K562 (cell line): ENCODE measurements at regions of chr17 and their contacts with region 1.

Region 1: GRCh38 chr17:21034340-21035235 is 8.2 kb downstream of the USP22 start:
- DNase-seq: peak in 1 of 4 experiments; percentile 25
- ATAC-seq: peak; percentile 66
- H3K4me3 ChIP-seq: no peak overlapping the region
- H3K27ac ChIP-seq: peak overlapping the region; percentile 64
- H3K4me1 ChIP-seq: peaks cover 9 to 34% of the 10 kb centered on the region in 2 experiments; a peak in 4 of 5 replicates
- H3K27me3 ChIP-seq: no peaks in the 10 kb centered on the region
- CTCF ChIP-seq: no peak
- EP300 ChIP-seq: peak; percentile 77
- POLR2A ChIP-seq: no peak
- RAD21 ChIP-seq: no peak

Region 2: DNA sequence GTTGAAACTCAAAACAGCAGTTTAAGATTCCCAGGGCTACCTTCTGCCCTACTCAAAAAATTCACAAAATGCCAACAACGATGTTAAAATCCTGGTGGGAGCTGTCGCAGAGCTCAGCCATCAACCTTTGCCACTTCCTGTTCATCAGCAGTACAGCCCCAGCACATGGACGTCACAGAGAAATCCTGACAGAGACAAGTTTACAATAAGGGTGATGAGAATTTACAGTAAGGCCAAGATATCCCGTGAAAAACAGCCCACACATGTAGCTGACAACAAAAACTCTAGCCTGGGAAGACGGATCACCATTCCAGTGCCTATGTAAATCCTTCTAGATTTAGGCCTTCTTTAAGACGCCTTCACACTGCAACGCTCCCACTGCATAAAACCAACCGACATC is 10.6 kb before region 1 on chr17:
- CTCF ChIA-PET with region 1: no interaction called
- POLR2A ChIA-PET with region 1: interaction called, 10 read pairs
- in situ Hi-C with region 1: no loop called
- intact Hi-C with region 1: no loop called
- DNase-seq: no peak
- ATAC-seq: no peak
- H3K4me3 ChIP-seq: no peak overlapping the region
- H3K27ac ChIP-seq: no peak overlapping the region
- H3K4me1 ChIP-seq: no peaks in the 10 kb centered on the region; a peak in 1 of 5 replicates
- H3K27me3 ChIP-seq: no peaks in the 10 kb centered on the region
- CTCF ChIP-seq: no peak
- EP300 ChIP-seq: no peak
- POLR2A ChIP-seq: no peak
- RAD21 ChIP-seq: no peak

Region 3: DNA sequence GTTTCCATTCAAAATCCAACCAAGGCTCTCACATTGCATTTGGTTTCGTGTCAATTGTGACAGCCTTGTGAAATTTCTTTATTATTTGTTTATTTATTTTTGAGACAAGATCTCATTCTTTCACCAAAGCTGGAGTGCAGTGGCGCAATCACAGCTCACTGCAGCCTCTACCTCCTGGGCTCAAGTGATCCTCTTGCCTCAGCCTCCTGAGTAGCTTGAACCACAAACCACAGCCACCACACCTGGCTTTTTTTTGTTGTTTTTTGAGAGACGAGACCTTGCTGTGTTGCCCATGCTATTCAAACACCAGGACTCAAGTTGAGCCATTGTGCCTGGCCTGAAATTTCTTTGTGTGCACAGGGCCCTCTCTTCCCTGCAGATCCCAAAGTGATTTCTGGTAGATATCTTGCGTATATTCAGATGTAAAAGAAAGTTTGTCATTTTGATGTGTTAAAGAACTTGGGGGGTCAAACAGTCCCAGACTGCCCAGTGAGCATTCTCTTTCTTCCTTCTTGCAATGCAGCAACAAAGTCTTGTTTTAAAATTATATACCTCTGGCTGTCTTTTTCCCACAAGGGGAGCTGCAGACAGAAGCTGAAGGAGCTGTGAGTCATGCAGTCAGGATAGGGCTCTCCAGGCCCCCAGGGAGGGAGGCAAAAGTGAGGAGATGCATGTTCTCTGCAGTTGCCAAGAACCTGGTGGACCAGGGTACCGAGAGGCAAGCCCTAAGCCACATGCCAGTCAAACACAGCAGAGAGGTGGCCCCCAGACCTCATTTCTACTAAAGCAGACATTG is 23.7 kb after region 1 on chr17:
- CTCF ChIA-PET with region 1: no interaction called
- POLR2A ChIA-PET with region 1: no interaction called
- in situ Hi-C with region 1: no loop called
- intact Hi-C with region 1: no loop called
- DNase-seq: no peak
- ATAC-seq: peak; percentile 54; the same call in 2 of the 3 replicates
- H3K4me3 ChIP-seq: no peak overlapping the region
- H3K27ac ChIP-seq: no peak overlapping the region
- H3K4me1 ChIP-seq: peaks cover 0 to 11% of the 10 kb centered on the region in 2 experiments; a peak in 3 of 5 replicates
- H3K27me3 ChIP-seq: peaks cover 0 to 25% of the 10 kb centered on the region in 2 experiments; a peak in 2 of 5 replicates
- CTCF ChIP-seq: peak in 2 of 3 experiments; percentile 13 to 16; a peak in 1 of 6 replicates
- EP300 ChIP-seq: no peak
- POLR2A ChIP-seq: no peak
- RAD21 ChIP-seq: no peak